ENCODE measurements at regions of chr2 and their contacts with region 1.

Region 1: DNA sequence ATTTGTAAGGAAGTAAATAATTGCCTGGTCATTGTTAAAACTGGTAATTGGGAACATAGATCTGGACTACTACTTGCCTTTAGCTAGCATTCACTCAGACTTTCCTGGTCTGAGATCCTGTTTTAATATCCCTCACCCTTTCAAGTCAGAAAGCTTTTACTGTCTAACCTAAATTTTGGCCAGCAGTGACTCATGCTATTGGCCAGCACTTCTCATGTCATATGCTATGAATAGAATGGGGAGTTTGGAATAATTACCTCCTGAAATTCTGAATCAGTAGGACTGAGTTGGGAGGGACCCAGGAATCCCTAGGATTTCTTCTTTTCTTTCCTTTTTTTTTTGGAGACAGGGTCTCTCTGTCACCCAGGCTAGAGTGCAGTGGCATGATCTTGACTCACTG is 19.3 kb downstream of the STK36 start:
- DNase-seq: no peak
- H3K4me3 Mint-ChIP-seq: no peak overlapping the region
- H3K27ac Mint-ChIP-seq: no peak overlapping the region
- H3K4me1 Mint-ChIP-seq: no peaks in the 10 kb centered on the region
- H3K27me3 Mint-ChIP-seq: no peaks in the 10 kb centered on the region

Region 2: GRCh38 chr2:218671654-218672566 is 19.3 kb before region 1 on chr2 and contains the starts of genes RNF25 and STK36:
- CTCF ChIA-PET with region 1: interaction called, 16 read pairs
- POLR2A ChIA-PET with region 1: no interaction called
- DNase-seq: peak; percentile 85
- H3K4me3 Mint-ChIP-seq: peak within 1 kb of the TSS; percentile 97
- H3K27ac Mint-ChIP-seq: peak within 1 kb of the TSS; percentile 88
- H3K4me1 Mint-ChIP-seq: peaks cover 27% of the 10 kb centered on the region
- H3K27me3 Mint-ChIP-seq: no peaks in the 10 kb centered on the region
- total RNA-seq, gene RNF25: 15.1 to 21.9 TPM
- total RNA-seq, gene STK36: 17.6 to 17.9 TPM

Region 3: DNA sequence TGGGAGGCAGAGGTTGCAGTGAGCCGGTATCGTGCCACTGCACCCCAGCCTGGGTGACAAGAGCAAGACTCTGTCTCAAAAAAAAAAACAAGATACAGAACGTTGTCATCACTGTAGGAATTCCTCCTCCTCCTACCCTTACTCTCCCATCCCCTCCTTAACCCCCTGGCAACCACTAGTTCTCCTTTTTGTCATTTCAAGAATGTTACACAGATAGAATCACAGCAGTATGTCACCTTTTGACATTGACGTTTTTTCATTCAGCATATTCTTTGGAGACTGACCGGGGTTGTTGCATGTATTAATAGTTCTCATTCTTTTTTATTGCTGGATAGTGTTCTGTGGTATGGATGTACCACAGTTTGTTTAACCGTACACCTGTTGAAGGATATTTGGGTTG is 51.8 kb after region 1 on chr2:
- CTCF ChIA-PET with region 1: no interaction called
- POLR2A ChIA-PET with region 1: no interaction called
- DNase-seq: no peak
- H3K4me3 Mint-ChIP-seq: no peak overlapping the region
- H3K27ac Mint-ChIP-seq: no peak overlapping the region
- H3K4me1 Mint-ChIP-seq: peaks cover 16% of the 10 kb centered on the region
- H3K27me3 Mint-ChIP-seq: no peaks in the 10 kb centered on the region

Measured in activated CD4-positive, alpha-beta memory T cell treated with anti-CD3 and anti-CD28 coated beads, Interleukin-2, amount 10 ng/mL, durations not matched to agents 7 days and 5 days (primary cell).